ENCODE measurements at regions of chr9 and their contacts with region 1.

Region 1: DNA sequence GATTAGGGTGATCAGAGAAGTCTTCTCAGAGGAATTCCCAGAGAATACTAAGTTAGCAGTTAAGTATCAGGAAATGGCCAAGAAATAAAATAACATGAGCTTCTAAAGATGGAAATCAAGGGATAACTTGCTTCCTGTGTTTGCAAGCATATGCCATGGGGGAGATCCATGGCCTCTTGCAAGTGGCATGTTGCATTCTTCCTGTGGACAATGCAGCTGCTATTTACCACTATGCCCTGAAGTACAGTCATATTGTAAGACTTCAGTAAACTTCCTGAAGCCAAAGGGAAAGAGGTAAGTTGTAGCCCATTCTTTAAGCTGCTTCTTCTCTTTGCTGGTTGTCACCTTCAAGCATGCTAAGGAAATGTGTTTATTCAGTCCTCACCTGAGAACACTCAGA is 154.7 kb upstream of the RUSC2 start:
- DNase-seq: no peak
- H3K4me3 ChIP-seq: no peak overlapping the region
- H3K27ac ChIP-seq: no peak overlapping the region
- H3K27me3 ChIP-seq: no peaks in the 10 kb centered on the region
- CTCF ChIP-seq: no peak

Region 2: DNA sequence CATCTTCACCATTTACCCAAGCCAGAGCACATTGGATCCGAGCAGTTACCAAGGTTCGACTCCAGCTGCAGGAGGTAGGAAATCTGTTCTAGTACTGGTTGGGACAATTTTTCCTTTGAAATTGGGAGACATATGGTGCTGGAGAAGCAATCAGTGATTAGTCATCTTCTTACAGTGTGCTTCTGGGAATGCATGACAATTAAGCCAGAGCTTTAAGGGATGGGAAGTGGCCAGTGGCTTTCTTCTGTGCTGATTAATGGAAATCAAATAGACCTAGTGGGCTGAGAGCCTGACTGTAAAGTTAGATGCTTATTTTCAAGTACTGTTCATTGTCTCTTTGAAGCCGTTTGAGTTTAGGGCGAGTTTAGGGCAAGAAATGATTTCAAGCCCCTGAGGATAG is 21.2 kb before region 1 on chr9:
- intact Hi-C with region 1: loop called in 1 of 2 experiments (anchors 2 kb)
- DNase-seq: no peak
- H3K4me3 ChIP-seq: no peak overlapping the region
- H3K27ac ChIP-seq: no peak overlapping the region
- H3K27me3 ChIP-seq: no peaks in the 10 kb centered on the region
- CTCF ChIP-seq: no peak

Measured in dorsolateral prefrontal cortex (tissue), 120 donors.